ENCODE measurements at regions of chr2 and their contacts with region 1.

Region 1: DNA sequence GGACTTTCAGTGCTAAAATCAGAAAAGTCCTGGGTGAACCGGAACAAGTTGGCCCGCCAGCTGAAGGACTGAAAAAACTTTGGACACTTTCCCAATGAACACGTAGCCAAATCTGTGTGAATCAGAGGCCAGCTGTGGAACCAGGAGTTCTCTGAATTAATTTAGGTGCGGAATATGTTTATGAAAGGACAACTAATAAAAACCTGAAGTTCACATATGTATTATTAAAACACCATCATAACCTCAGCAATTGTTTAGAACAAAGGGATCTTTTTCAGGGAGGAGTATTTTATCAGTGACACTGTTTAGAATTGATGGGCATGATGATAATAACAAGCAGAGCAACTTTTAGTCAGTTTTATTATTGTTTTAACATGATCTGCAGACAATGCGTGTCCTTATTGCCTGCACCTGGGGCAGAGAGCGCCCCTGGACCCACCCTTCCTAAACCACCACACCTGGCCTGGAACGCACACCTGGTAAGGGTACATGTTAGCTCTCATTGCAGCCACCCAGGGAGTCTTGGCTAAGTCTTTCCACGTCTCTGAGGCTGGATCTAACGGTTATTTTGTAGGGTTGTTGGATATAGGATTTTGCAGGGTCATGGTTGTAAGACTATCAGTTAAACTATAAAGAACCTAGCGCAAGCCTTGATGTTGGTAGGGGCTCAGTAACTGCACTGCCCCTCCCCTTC is 9.9 kb upstream of the ODC1 start:
- DNase-seq: no peak
- ATAC-seq: no peak
- H3K4me3 ChIP-seq: no peak overlapping the region
- H3K27ac ChIP-seq: no peak overlapping the region
- H3K4me1 ChIP-seq: no peaks in the 10 kb centered on the region
- H3K27me3 ChIP-seq: no peaks in the 10 kb centered on the region
- CTCF ChIP-seq: no peak

Region 2: DNA sequence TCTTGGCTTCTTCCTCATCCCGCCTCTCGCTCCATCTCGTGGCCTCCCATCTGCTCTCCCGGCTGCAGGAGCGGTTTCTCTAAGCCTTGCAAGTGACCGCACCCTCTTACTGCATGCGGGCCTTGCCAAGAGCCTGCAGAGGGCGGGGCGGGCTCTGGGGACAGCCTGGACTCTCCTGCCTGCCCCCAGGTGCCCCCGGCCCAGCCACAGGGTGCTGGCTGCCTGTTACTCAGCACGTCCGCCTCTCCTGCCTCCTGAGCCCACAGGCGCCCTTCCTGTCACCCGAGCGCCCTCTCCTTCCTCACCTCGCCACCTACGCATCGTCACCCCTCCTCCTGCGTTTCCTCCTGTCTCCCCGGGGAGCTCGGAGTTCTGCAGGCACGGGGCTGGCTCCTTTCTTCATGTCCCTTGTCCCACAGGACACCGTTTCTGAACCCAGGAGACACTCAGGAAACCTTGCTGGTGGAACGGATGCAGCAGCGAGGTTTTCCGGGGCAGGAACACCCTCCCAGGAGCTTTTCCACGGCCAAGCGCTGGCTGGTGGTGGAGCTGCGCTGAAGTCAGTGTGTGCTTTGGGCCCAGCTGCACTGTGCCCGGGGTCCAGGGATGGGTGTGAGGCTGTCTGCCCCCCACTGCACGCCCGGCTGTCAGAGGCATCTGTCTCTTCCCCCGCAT is 126.9 kb before region 1 on chr2:
- CTCF ChIA-PET with region 1: no interaction called
- POLR2A ChIA-PET with region 1: no interaction called
- in situ Hi-C with region 1: no loop called
- intact Hi-C with region 1: no loop called
- DNase-seq: no peak
- ATAC-seq: peak; percentile 69
- H3K4me3 ChIP-seq: peak overlapping the region; percentile 12 to 51
- H3K27ac ChIP-seq: peak overlapping the region; percentile 99
- H3K4me1 ChIP-seq: peaks cover 86% of the 10 kb centered on the region
- H3K27me3 ChIP-seq: no peaks in the 10 kb centered on the region
- CTCF ChIP-seq: no peak; the same call in 1 of the 2 replicates

Region 3: GRCh38 chr2:10493636-10494281 is 35.7 kb after region 1 on chr2:
- CTCF ChIA-PET with region 1: no interaction called
- POLR2A ChIA-PET with region 1: no interaction called
- in situ Hi-C with region 1: no loop called
- intact Hi-C with region 1: no loop called
- DNase-seq: peak; percentile 88
- ATAC-seq: peak; percentile 80
- H3K4me3 ChIP-seq: no peak overlapping the region; a peak in 1 of 4 replicates
- H3K27ac ChIP-seq: no peak overlapping the region
- H3K4me1 ChIP-seq: peaks cover 5% of the 10 kb centered on the region; the same call in 1 of the 2 replicates
- H3K27me3 ChIP-seq: no peaks in the 10 kb centered on the region
- CTCF ChIP-seq: no peak

Region 4: DNA sequence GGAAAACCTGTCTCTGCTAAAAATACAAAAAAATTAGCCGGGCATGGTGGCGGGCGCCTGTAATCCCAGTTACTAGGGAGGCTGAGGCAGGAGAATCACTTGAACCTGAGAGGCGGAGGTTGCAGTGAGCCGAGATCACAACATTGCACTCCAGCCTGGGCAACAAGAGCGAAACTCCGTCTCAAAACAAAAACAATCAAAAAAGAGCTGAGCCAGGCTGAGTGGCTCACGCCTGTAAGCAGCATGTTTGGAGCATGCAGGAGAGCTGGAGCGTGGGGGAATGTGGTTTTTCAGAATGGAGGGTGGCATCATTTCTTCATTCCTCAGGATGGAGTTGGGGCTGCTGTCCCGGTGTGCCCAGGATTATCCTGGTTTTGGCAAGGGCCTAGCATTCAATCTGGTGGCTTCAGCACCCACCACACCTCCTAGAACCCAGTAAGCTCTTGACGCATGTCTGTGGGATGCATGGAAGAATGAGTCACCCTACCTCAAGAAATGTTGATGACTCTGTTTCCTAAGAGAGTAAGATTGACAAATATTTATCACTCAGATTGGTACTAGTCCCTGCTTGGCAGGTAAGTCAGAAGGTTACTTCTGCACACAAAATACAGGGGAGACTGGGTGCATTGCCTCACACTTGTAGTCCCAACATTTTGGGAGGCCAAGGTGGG is 80.3 kb after region 1 on chr2:
- CTCF ChIA-PET with region 1: no interaction called
- POLR2A ChIA-PET with region 1: no interaction called
- in situ Hi-C with region 1: no loop called
- intact Hi-C with region 1: loop called (anchors 10 kb)
- DNase-seq: peak; percentile 60
- ATAC-seq: no peak
- H3K4me3 ChIP-seq: no peak overlapping the region
- H3K27ac ChIP-seq: no peak overlapping the region
- H3K4me1 ChIP-seq: no peaks in the 10 kb centered on the region
- H3K27me3 ChIP-seq: no peaks in the 10 kb centered on the region
- CTCF ChIP-seq: no peak